ENCODE measurements at regions of chr5 and their contacts with region 1.

Region 1: DNA sequence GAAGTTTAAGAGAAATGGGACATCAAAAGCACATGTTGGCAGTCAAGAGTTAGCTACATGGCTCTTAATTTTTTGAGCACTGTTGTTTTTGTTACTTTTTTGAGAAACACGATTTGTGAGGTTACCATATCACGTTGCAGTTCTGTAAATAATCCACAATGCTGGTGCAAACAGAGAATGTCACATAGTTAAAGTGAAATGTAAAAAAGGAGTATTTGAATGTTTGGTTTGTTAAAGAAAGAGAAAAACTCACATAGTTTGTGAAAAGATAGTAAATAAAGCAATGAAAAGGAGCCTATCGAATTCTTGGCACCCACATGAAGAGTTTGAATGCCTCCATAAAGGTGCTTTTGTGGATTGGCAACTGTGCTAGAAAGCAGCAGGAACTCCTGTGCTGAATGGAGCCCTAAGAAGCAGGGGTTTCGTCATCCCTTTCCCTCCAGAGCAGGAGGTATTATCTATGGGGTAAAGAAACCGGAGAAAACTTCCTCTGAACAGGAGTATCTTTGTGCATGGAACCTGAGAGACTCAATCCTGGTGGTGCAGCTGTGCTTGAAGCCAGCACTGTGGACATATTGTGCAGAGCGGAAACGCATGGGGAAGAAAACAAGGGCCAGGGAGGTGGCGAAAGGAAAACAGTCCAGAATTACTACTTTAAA is 148.5 kb upstream of the OTULINL start:
- DNase-seq: no peak
- H3K4me3 ChIP-seq: no peak overlapping the region
- H3K27ac ChIP-seq: no peak overlapping the region
- H3K4me1 ChIP-seq: peaks cover 0 to under 1% (median 0%) of the 10 kb centered on the region in 4 donors
- H3K27me3 ChIP-seq: no peaks in the 10 kb centered on the region
- CTCF ChIP-seq: no peak
- EP300 ChIP-seq: no peak
- POLR2A ChIP-seq: no peak

Region 2: GRCh38 chr5:14399054-14399692 is 33.9 kb before region 1 on chr5:
- in situ Hi-C with region 1: no loop called
- intact Hi-C with region 1: loop called (anchors 1 kb)
- DNase-seq: no peak
- H3K4me3 ChIP-seq: no peak overlapping the region
- H3K27ac ChIP-seq: no peak overlapping the region
- H3K4me1 ChIP-seq: no peaks in the 10 kb centered on the region
- H3K27me3 ChIP-seq: no peaks in the 10 kb centered on the region
- CTCF ChIP-seq: peak; percentile 51 to 66 (median 60)
- EP300 ChIP-seq: no peak
- POLR2A ChIP-seq: no peak

Measured in transverse colon (tissue), 4 donors.